ENCODE measurements at regions of chrX and their contacts with region 1.

Region 1: DNA sequence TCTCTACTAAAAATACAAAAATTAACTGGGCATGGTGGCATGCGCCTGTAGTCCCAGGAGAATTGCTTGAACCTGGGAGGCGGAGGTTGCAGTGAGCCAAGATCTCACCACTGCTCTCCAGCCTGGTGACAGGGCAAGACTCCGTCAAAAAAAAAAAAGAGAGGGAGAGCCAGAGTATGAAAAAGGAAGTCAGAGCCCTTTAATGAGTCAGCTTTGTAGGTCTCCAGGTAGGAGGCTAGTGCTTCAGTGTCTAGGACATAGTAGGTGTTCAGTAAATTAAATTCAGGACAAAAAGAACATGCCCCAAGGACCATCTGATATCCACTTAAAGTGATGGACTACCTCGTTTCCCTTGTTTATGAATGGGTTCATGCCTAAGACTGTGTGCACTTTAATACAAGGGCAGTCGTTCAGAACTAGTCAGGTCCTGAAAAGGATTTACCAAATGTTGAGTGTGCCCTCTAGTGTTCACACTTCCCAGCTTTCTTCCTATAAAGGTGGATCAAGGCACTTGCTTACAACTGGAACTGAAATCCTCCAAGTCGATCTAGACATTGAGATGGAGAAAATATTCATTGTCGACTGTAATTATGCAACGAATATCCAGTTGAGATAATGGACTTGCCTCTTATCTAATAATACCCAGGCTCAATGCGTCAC is 29.0 kb downstream of the F9 start:
- DNase-seq: peak; percentile 89
- H3K4me3 ChIP-seq: no peak overlapping the region
- H3K27ac ChIP-seq: peak overlapping the region; percentile 12
- H3K4me1 ChIP-seq: peaks cover 14% of the 10 kb centered on the region
- H3K27me3 ChIP-seq: no peaks in the 10 kb centered on the region
- CTCF ChIP-seq: peak; percentile 78

Region 2: DNA sequence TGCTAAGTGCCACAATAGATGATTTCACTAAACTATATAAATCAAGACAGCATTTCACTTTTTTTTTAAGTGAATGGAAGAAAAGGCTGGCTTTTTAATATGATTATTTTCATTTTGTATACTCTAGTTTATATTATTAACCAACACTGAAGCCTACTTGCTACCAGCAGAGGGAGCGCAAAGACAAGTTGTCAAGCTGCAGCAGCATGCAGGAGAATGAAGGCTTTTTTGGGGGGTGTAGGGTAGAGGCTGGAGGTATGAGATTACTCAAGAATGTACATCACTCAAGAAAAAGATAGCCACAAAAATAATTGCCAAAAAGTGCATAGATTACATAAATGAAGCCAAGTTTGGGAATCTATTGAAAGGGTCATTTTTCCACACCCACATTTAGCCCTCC is 1367.5 kb before region 1 on chrX:
- CTCF ChIA-PET with region 1: no interaction called
- POLR2A ChIA-PET with region 1: no interaction called
- intact Hi-C with region 1: loop called (anchors 10 kb)
- DNase-seq: peak; percentile 70
- H3K4me3 ChIP-seq: no peak overlapping the region
- H3K27ac ChIP-seq: no peak overlapping the region
- H3K4me1 ChIP-seq: no peaks in the 10 kb centered on the region
- H3K27me3 ChIP-seq: no peaks in the 10 kb centered on the region
- CTCF ChIP-seq: peak; percentile 72

Region 3: DNA sequence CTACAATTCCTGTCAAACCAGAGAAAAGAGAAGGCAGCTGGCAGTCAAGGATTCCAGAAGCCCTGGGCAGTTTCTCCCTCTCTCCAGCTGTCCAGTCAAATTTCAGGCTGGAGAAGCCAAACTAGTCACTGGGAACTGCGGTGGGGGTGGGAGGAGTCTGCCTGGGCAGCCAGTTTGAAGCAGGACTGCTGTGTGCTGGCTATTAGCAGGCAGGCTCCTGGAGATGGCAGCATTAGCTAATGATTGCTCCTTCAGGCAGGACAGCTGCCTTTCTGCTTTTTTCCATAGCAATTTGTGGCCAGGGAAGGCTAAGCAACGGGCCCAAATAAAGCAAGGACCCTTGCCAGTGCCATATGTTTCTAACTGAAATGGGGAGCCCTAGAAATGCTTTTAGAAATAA is 803.3 kb before region 1 on chrX:
- CTCF ChIA-PET with region 1: no interaction called
- POLR2A ChIA-PET with region 1: no interaction called
- intact Hi-C with region 1: loop called (anchors 2 kb)
- DNase-seq: peak; percentile 76
- H3K4me3 ChIP-seq: no peak overlapping the region
- H3K27ac ChIP-seq: no peak overlapping the region
- H3K4me1 ChIP-seq: peaks cover 5% of the 10 kb centered on the region
- H3K27me3 ChIP-seq: no peaks in the 10 kb centered on the region
- CTCF ChIP-seq: peak; percentile 64

Region 4: GRCh38 chrX:138775517-138775916 is 784.0 kb before region 1 on chrX:
- CTCF ChIA-PET with region 1: no interaction called
- POLR2A ChIA-PET with region 1: interaction called, 4 read pairs
- intact Hi-C with region 1: loop called (anchors 2 kb)
- DNase-seq: peak; percentile 71
- H3K4me3 ChIP-seq: no peak overlapping the region
- H3K27ac ChIP-seq: no peak overlapping the region
- H3K4me1 ChIP-seq: peaks cover 22% of the 10 kb centered on the region
- H3K27me3 ChIP-seq: no peaks in the 10 kb centered on the region
- CTCF ChIP-seq: peak; percentile 60

Region 5: GRCh38 chrX:139392507-139392906 is 167.0 kb before region 1 on chrX:
- CTCF ChIA-PET with region 1: no interaction called
- POLR2A ChIA-PET with region 1: no interaction called
- intact Hi-C with region 1: loop called (anchors 5 kb)
- DNase-seq: peak; percentile 17
- H3K4me3 ChIP-seq: no peak overlapping the region
- H3K27ac ChIP-seq: no peak overlapping the region
- H3K4me1 ChIP-seq: no peaks in the 10 kb centered on the region
- H3K27me3 ChIP-seq: no peaks in the 10 kb centered on the region
- CTCF ChIP-seq: 0 out of 2 replicates have a peak, but pooled peaks have one; percentile 32

Region 6: GRCh38 chrX:139518475-139518874 is 41.0 kb before region 1 on chrX:
- CTCF ChIA-PET with region 1: no interaction called
- POLR2A ChIA-PET with region 1: no interaction called
- intact Hi-C with region 1: no loop called
- DNase-seq: no peak
- H3K4me3 ChIP-seq: no peak overlapping the region
- H3K27ac ChIP-seq: no peak overlapping the region
- H3K4me1 ChIP-seq: no peaks in the 10 kb centered on the region
- H3K27me3 ChIP-seq: no peaks in the 10 kb centered on the region
- CTCF ChIP-seq: no peak

Measured in A673 (cell line).